CD8-positive, alpha-beta T cell (primary cell): ENCODE measurements at regions of chr5 and their contacts with region 1.

Region 1: DNA sequence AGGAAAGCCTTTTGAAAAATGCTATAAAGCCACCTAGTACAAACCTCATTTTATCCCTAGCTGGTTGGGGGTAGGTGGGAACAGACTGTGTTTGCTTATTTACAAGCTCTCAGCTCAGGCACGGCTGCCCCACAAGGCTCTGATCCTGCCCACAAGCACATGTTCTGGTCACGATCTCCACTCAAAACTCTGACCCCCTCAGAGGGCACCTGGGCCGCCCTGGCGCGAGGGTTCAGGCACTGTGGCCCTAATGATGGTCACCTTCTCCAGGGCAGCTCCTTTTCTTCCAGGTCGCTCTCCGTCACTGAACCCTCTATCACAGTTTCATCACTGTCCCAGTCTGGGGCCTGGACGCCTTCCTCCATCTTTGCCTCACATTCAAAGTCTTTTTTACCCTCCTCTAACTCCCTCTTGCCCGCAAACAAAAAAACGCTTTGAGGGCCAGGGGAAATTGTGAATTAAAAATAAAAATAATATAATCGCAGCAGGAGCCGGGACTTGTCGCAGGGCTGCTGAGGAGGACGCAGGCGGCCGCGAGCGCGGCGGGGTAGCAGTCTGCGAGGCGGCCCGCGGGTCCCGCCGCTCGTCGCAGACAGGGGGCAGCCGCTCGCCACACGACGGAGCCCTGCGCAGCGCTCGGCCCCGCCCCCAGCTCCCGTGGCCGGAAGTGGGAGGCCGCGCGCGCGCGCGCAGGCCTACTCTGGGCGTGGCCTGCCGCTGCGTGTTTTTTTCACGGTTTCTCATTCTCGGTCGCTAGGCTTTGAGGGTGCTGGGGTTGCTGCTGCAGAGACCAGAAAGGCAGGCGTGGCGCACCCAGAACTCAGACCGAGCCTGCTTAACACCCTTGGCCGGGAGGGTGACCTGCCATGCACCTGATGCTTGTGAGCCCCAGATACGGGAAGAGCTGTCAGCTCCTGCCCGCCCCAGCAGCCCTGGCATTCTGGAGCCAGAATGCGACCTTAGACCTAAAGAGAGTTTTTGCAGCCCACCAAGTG is at the start of gene ANKRD31:
- DNase-seq: peak; percentile 81 to 95 (median 90)
- ATAC-seq: peak; percentile 98
- H3K4me3 ChIP-seq: peak within 1 kb of the TSS; percentile 65 to 91
- H3K4me3 Mint-ChIP-seq: peak within 1 kb of the TSS; percentile 94
- H3K27ac ChIP-seq: peak within 1 kb of the TSS; percentile 84 to 89
- H3K27ac Mint-ChIP-seq: peak within 1 kb of the TSS; percentile 99
- H3K4me1 ChIP-seq: peaks cover 15% of the 10 kb centered on the region
- H3K4me1 Mint-ChIP-seq: peaks cover 25% of the 10 kb centered on the region
- H3K27me3 ChIP-seq: no peaks in the 10 kb centered on the region
- H3K27me3 Mint-ChIP-seq: no peaks in the 10 kb centered on the region
- CTCF ChIP-seq: peak; percentile 89
- total RNA-seq, gene ANKRD31: 0.84 to 0.89 TPM

Region 2: GRCh38 chr5:74766849-74767578 is 469.6 kb before region 1 on chr5 and contains the starts of genes GFM2 and NSA2:
- CTCF ChIA-PET with region 1: interaction called, 9 read pairs
- POLR2A ChIA-PET with region 1: interaction called, 6 read pairs
- intact Hi-C with region 1: loop called (anchors 1 to 2 kb)
- DNase-seq: peak; percentile 83 to 95 (median 93)
- ATAC-seq: peak; percentile 85
- H3K4me3 ChIP-seq: peak within 1 kb of the TSS; percentile 94 to 96
- H3K4me3 Mint-ChIP-seq: peak within 1 kb of the TSS; percentile 100
- H3K27ac ChIP-seq: peak within 1 kb of the TSS; percentile 70 to 84
- H3K27ac Mint-ChIP-seq: peak within 1 kb of the TSS; percentile 97
- H3K4me1 ChIP-seq: peaks cover 25% of the 10 kb centered on the region
- H3K4me1 Mint-ChIP-seq: peaks cover 39% of the 10 kb centered on the region
- H3K27me3 ChIP-seq: no peaks in the 10 kb centered on the region
- H3K27me3 Mint-ChIP-seq: no peaks in the 10 kb centered on the region
- CTCF ChIP-seq: no peak
- total RNA-seq, gene GFM2: 11.0 to 15.0 TPM
- total RNA-seq, gene NSA2: 142 TPM

Region 3: DNA sequence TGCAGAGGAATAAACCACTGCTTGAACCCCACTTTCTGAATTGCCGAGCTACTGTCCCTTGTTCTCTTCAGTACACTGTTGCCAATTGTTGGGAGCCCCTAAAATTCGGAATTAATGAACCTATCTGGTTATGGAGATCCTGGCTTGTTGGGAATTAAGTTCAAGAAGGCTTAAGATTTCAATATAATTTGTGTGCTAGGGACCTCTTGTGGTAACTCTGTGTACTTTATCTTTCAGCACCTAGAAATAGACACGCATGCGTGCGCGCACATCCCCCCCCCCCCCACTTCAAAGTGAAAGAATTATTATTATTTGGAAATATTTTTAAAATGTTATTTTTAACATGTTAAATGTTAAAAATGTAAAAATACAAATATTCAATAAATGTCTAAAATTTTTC is 317.1 kb before region 1 on chr5:
- CTCF ChIA-PET with region 1: interaction called, 4 read pairs
- POLR2A ChIA-PET with region 1: interaction called, 5 read pairs
- intact Hi-C with region 1: loop called in 1 of 2 experiments (anchors 1 kb)
- DNase-seq: peak in 3 of 9 experiments; percentile 18 to 73 (median 62)
- ATAC-seq: peak; percentile 78
- H3K4me3 ChIP-seq: no peak overlapping the region
- H3K4me3 Mint-ChIP-seq: no peak overlapping the region
- H3K27ac ChIP-seq: no peak overlapping the region
- H3K27ac Mint-ChIP-seq: no peak overlapping the region
- H3K4me1 ChIP-seq: no peaks in the 10 kb centered on the region
- H3K4me1 Mint-ChIP-seq: no peaks in the 10 kb centered on the region
- H3K27me3 ChIP-seq: no peaks in the 10 kb centered on the region
- H3K27me3 Mint-ChIP-seq: peaks cover 2% of the 10 kb centered on the region
- CTCF ChIP-seq: peak; percentile 79

Region 4: GRCh38 chr5:75265731-75266130 is 29.1 kb after region 1 on chr5:
- CTCF ChIA-PET with region 1: interaction called, 15 read pairs
- POLR2A ChIA-PET with region 1: interaction called, 4 read pairs
- intact Hi-C with region 1: loop called (anchors 1 to 2 kb)
- DNase-seq: peak in 2 of 9 experiments; percentile 57 to 67
- ATAC-seq: peak; percentile 78
- H3K4me3 ChIP-seq: no peak overlapping the region
- H3K4me3 Mint-ChIP-seq: no peak overlapping the region
- H3K27ac ChIP-seq: no peak overlapping the region
- H3K27ac Mint-ChIP-seq: no peak overlapping the region
- H3K4me1 ChIP-seq: no peaks in the 10 kb centered on the region
- H3K4me1 Mint-ChIP-seq: peaks cover 3% of the 10 kb centered on the region
- H3K27me3 ChIP-seq: no peaks in the 10 kb centered on the region
- H3K27me3 Mint-ChIP-seq: peaks cover 5% of the 10 kb centered on the region
- CTCF ChIP-seq: peak; percentile 68

Region 5: DNA sequence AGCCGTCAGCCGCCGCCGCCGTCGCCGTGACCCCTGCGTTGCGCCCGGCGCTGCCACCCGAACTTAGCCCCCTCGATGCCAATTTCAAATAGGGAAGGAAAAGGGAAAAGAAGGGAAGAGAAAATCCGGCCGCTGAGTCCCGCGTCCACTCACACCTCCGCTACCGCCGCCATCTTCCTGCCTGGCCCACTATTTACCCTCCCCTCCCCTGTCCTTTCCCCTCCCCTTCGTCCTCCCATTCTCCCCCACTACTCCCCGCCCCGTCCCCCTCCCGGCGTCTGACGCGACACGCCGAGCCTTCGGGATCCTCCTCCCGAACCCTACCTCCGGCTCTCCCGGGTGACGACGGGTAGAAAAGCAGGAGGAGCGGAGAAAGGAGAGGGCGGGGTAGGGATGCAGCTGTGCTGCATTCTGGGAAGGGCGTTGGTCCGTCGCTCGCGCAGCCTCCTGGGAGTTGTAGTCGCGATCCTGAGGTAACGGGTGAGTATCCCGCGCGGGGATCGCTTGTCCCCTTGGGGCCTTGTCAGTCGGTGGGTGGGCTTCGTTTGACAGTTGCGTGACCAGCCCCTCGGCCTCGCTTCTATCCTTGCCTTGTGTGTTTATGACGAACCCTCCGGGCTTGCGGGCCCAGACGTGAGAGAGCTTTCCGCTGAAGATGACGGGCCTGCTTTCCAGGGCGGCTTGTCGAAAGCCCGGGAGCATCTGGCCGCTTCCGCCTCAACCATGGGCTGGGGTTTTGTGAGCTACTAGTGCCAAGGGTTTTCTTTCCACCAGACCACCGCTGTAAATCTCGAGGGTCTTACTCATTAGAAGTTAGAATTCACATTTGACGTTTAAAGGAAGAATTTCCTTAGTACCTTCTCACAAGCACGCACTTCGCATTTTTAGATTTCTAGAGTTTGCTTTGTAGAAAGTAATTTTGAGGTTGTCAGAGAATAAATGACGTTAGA is 275.1 kb after region 1 on chr5 and contains the starts of genes CERT1 and POLK:
- CTCF ChIA-PET with region 1: no interaction called
- POLR2A ChIA-PET with region 1: no interaction called
- intact Hi-C with region 1: loop called (anchors 1 to 5 kb)
- DNase-seq: peak; percentile 78 to 97 (median 89)
- ATAC-seq: peak; percentile 87
- H3K4me3 ChIP-seq: peak within 1 kb of the TSS; percentile 72 to 79
- H3K4me3 Mint-ChIP-seq: peak within 1 kb of the TSS; percentile 96
- H3K27ac ChIP-seq: peak within 1 kb of the TSS; percentile 74 to 78
- H3K27ac Mint-ChIP-seq: peak within 1 kb of the TSS; percentile 97
- H3K4me1 ChIP-seq: peaks cover 29% of the 10 kb centered on the region
- H3K4me1 Mint-ChIP-seq: peaks cover 64% of the 10 kb centered on the region
- H3K27me3 ChIP-seq: no peaks in the 10 kb centered on the region
- H3K27me3 Mint-ChIP-seq: no peaks in the 10 kb centered on the region
- CTCF ChIP-seq: no peak
- total RNA-seq, gene CERT1: 29.2 to 36.4 TPM
- total RNA-seq, gene POLK: 6.9 to 10.0 TPM

Region 6: DNA sequence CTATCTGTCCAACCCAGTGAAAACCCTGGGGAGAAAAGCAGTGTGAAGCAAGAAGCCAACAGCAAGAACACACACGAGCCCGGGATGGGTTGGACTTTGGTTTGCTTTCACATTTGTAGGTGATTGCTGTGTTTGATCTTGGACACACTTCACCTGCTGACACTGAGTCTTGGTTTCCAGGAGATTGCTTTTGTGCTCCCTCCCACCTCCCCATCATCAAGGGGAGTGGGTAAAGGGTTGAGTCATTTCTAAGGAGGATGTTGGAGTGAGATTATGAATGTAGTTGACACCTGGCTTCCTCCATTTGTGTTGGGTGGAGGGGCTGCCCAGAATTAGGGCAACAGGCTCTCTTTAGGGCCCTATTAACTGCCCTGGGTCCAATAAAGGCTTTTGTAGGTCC is 412.1 kb after region 1 on chr5:
- CTCF ChIA-PET with region 1: no interaction called
- POLR2A ChIA-PET with region 1: no interaction called
- intact Hi-C with region 1: no loop called
- DNase-seq: no peak
- ATAC-seq: no peak
- H3K4me3 ChIP-seq: no peak overlapping the region
- H3K4me3 Mint-ChIP-seq: no peak overlapping the region
- H3K27ac ChIP-seq: no peak overlapping the region
- H3K27ac Mint-ChIP-seq: no peak overlapping the region
- H3K4me1 ChIP-seq: no peaks in the 10 kb centered on the region
- H3K4me1 Mint-ChIP-seq: no peaks in the 10 kb centered on the region
- H3K27me3 ChIP-seq: no peaks in the 10 kb centered on the region
- H3K27me3 Mint-ChIP-seq: no peaks in the 10 kb centered on the region
- CTCF ChIP-seq: no peak

Region 7: GRCh38 chr5:75717082-75717922 is 480.7 kb after region 1 on chr5 and contains the start of gene POC5:
- CTCF ChIA-PET with region 1: no interaction called
- POLR2A ChIA-PET with region 1: interaction called, 3 read pairs
- intact Hi-C with region 1: loop called (anchors 2 to 10 kb)
- DNase-seq: peak; percentile 96 to 99 (median 98)
- ATAC-seq: peak; percentile 95
- H3K4me3 ChIP-seq: peak within 1 kb of the TSS; percentile 82 to 93
- H3K4me3 Mint-ChIP-seq: peak within 1 kb of the TSS; percentile 100
- H3K27ac ChIP-seq: peak within 1 kb of the TSS; percentile 69 to 88
- H3K27ac Mint-ChIP-seq: peak within 1 kb of the TSS; percentile 98
- H3K4me1 ChIP-seq: peaks cover 11% of the 10 kb centered on the region
- H3K4me1 Mint-ChIP-seq: peaks cover 39% of the 10 kb centered on the region
- H3K27me3 ChIP-seq: no peaks in the 10 kb centered on the region
- H3K27me3 Mint-ChIP-seq: no peaks in the 10 kb centered on the region
- CTCF ChIP-seq: no peak
- total RNA-seq, gene POC5: 6.5 to 7.9 TPM